ENCODE measurements at regions of chr4 and their contacts with region 1.

Region 1: DNA sequence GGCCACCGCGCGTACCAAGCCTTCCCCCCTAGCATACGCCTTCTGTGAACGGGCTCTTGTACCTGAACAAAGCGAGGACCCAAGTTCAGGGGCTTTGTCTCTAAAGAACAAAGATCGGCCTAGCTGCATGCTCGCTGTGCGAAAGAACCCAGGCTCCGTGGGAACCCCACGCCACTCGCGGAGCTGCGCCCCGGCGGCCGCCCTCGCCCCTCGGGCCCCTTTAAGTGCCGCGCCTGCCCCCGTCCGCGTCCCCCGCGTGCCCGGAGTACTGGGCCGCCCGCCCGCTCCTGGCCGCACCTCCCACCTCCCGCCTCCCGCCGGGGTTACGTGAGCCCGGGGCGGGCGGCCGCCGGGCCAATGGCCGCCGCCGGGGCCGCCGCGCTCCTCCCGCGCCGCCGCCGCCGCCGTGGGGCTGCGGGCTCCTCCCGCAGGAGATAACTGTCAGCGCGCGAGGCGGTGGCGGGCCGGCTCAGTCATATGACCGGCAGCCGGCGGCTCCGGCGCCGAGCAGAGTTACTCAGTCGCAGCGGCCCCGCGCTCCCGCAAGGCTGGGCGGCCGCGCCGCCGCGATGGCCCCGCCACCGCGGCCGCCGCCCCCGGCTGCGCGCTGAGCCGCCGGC is at the start of gene FNIP2:
- DNase-seq: peak; percentile 91
- total RNA-seq, gene FNIP2: 38.5 TPM

Region 2: DNA sequence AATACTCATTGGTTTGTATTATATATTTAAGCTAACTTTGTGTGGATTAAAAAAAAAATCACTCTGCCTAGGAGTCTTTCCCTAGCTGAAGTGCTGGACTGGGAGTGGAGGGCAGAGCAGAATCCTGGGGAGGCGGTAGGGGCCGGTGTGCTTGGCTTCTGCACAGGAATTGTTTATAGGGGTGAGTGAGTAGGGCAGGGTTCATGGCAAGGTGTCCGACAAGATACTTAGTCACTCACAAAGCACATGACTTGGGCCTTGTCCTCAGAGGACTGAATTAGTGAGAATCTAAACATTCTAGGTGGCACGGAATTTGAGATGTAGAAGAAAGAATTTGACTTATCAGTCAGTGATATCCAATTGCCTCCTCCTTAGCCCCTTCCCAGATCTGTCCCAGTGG is 32.4 kb after region 1 on chr4:
- intact Hi-C with region 1: no loop called
- DNase-seq: no peak

Region 3: GRCh38 chr4:158845311-158846041 is 76.8 kb after region 1 on chr4:
- intact Hi-C with region 1: loop called (anchors 2 kb)
- DNase-seq: no peak